ENCODE measurements at regions of chr10 and their contacts with region 1.

Region 1: DNA sequence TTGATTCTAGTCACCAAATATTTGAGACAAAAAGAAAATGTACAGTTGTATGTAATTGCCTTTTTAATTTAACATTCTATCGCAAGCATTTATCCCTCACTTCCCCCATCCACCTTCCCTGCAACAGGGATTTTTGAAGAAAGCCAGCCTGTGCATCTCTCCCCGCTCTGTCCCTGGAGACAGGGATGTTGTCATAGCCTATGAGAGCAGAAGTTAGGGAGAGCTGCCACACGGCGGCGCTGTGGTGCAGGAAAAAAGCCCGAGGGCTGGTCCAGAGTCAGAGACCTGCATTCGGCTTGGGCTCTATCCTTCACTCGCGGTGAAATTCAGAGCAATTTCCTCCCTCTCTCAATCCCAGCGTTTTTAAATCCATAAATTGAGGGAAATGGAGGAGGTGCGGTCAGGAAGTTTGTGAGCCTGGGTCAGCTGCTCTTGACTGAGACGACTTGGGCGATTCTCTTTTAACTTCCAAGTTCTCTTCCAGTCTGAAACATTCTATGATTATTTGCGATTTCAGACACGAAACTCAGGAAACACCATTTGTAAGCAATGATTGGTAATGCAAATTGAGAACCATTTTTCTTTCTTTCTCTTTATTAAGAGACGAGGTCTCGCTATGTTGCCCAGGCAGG is 17.5 kb downstream of the HKDC1 start:
- DNase-seq: peak; percentile 89
- ATAC-seq: peak; percentile 96
- H3K4me3 ChIP-seq: no peak overlapping the region
- H3K27ac ChIP-seq: no peak overlapping the region
- H3K4me1 ChIP-seq: peaks cover 23% of the 10 kb centered on the region
- H3K27me3 ChIP-seq: no peaks in the 10 kb centered on the region
- CTCF ChIP-seq: peak; percentile 91

Region 2: DNA sequence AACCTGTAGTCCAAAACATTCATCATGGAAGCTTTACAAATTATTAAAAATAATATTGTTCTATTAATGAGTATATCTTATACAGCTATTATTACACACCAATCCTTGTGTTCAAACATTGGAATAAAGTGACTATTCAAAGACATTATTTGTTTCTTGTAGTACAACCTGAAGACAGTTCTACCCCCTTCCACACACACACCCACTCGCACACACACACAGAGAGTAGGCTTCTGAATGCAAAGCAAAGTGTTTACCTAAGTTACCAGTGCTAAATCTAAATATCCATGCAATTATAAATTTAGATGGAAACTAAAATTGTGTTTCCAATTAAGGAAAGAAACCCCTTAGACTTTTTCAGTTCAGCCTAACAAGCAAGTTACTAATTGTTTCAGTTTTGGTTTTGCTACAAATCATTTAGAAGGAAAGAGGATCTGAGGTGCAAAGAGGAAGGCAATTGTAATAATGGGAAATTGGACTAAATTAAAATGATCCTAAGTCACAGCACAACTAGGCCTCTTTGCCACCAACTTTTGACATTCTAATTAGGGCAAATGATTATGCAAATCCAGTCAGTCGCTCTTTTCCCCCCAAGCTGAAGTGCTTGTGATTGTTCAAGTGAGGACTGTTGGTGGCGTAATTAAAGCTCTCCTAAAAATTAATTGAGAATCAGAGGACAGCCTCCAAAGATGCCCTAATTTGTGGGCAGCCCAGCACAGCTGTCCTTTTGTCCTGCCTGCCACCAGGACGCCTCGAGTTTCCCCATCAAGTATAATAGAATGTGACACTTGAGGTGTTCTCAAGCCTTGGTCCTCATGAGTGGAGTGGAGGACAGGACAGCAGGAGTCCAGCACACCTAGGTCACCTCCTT is 985.8 kb before region 1 on chr10:
- intact Hi-C with region 1: no loop called
- DNase-seq: no peak
- ATAC-seq: no peak
- H3K4me3 ChIP-seq: no peak overlapping the region
- H3K27ac ChIP-seq: no peak overlapping the region
- H3K4me1 ChIP-seq: no peaks in the 10 kb centered on the region
- H3K27me3 ChIP-seq: no peaks in the 10 kb centered on the region
- CTCF ChIP-seq: no peak

Region 3: GRCh38 chr10:68959695-68960524 is 277.7 kb before region 1 on chr10:
- intact Hi-C with region 1: no loop called
- DNase-seq: no peak
- ATAC-seq: no peak
- H3K4me3 ChIP-seq: no peak overlapping the region
- H3K27ac ChIP-seq: no peak overlapping the region
- H3K4me1 ChIP-seq: peaks cover 37% of the 10 kb centered on the region
- H3K27me3 ChIP-seq: no peaks in the 10 kb centered on the region
- CTCF ChIP-seq: no peak

Region 4: GRCh38 chr10:69392481-69393000 is 154.9 kb after region 1 on chr10:
- intact Hi-C with region 1: loop called (anchors 5 kb)
- DNase-seq: peak; percentile 89
- ATAC-seq: peak; percentile 95 to 96
- H3K4me3 ChIP-seq: no peak overlapping the region
- H3K27ac ChIP-seq: no peak overlapping the region
- H3K4me1 ChIP-seq: peaks cover 5% of the 10 kb centered on the region
- H3K27me3 ChIP-seq: no peaks in the 10 kb centered on the region
- CTCF ChIP-seq: peak; percentile 93

Region 5: DNA sequence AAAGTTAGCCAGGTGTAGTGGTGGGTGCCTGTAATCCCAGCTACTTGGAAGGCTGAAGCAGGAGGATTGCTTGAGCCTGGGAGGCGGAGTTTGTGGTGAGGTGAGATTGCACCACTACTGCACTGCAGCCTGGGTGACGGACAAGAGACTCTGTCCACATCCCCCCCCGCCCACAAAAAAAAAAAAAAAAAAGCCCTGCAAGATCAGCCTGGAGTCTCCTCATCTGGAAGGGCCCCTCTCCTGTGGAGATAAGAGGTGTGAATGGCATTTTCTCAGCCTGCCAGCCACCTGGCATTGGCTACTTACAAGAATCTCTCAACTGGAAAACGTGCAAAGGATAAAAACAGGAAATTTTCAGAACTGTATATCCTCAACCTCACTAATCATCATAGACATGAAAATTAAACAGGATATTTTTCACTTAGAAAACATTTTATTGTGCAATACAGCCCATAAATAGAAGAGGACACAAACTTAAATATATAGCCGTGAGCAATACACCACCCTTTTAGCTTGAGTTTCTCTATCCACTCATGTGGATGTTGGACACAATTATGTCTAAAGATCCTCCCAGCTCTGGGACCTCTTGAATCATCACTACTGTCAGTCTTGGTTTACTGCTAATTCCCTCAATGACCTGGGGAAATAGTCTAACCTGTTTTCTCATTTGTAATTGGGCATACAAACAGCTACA is 202.3 kb after region 1 on chr10:
- intact Hi-C with region 1: no loop called
- DNase-seq: peak; percentile 83
- ATAC-seq: peak; percentile 87 to 91
- H3K4me3 ChIP-seq: no peak overlapping the region
- H3K27ac ChIP-seq: peak overlapping the region; percentile 79
- H3K4me1 ChIP-seq: peaks cover 27% of the 10 kb centered on the region
- H3K27me3 ChIP-seq: no peaks in the 10 kb centered on the region
- CTCF ChIP-seq: no peak

Region 6: GRCh38 chr10:70074165-70074564 is 836.5 kb after region 1 on chr10:
- intact Hi-C with region 1: no loop called
- DNase-seq: no peak
- ATAC-seq: no peak
- H3K4me3 ChIP-seq: no peak overlapping the region
- H3K27ac ChIP-seq: no peak overlapping the region
- H3K4me1 ChIP-seq: no peaks in the 10 kb centered on the region
- H3K27me3 ChIP-seq: no peaks in the 10 kb centered on the region
- CTCF ChIP-seq: no peak

Measured in lower lobe of right lung (tissue), 2 donors.